B cell (primary cell): ENCODE measurements at regions of chr5 and their contacts with region 1.

Region 1: DNA sequence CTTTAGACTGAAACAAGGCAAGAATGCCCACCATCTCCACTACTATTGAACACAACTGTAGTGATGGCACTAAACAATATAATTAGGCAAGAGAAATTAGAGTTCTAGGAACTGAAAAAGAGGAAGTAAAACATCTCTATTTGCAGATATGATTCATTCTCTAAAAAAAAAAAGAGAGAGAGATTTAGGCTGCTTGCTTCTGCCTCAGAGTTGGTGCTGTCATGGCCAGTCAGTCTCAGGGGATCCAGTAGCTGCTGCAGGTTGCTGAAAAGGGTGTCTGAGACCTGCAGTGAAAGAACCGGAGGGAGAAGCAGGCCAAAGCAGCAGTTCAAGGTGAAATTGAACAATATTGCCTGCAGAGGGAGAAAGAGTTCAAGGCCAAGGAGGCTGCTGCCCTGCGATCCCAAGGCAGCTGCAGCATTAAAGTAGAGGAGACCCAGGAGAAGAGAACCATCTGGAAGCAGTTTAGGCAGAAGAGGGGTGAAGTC is 72.5 kb downstream of the AP3B1 start:
- DNase-seq: peak; percentile 90
- ATAC-seq: peak; percentile 100
- H3K4me3 ChIP-seq: no peak overlapping the region
- H3K4me3 Mint-ChIP-seq: peak overlapping the region; percentile 4
- H3K27ac ChIP-seq: peak overlapping the region; percentile 29 to 33
- H3K27ac Mint-ChIP-seq: peak overlapping the region; percentile 85
- H3K4me1 ChIP-seq: peaks cover 8 to 10% of the 10 kb centered on the region in 2 donors
- H3K4me1 Mint-ChIP-seq: peaks cover 18% of the 10 kb centered on the region
- H3K27me3 ChIP-seq: no peaks in the 10 kb centered on the region
- H3K27me3 Mint-ChIP-seq: no peaks in the 10 kb centered on the region
- CTCF ChIP-seq: peak; percentile 67

Region 2: GRCh38 chr5:78109891-78110324 is 112.1 kb before region 1 on chr5:
- CTCF ChIA-PET with region 1: no interaction called
- POLR2A ChIA-PET with region 1: no interaction called
- intact Hi-C with region 1: loop called (anchors 2 kb)
- DNase-seq: peak; percentile 80
- ATAC-seq: peak; percentile 71
- H3K4me3 ChIP-seq: peak overlapping the region in 4 of 5 experiments; percentile 4 to 51 (median 30)
- H3K4me3 Mint-ChIP-seq: peak overlapping the region; percentile 64
- H3K27ac ChIP-seq: peak overlapping the region; percentile 69 to 83
- H3K27ac Mint-ChIP-seq: peak overlapping the region; percentile 73
- H3K4me1 ChIP-seq: peaks cover 56 to 67% of the 10 kb centered on the region in 2 donors
- H3K4me1 Mint-ChIP-seq: peaks cover 58% of the 10 kb centered on the region
- H3K27me3 ChIP-seq: no peaks in the 10 kb centered on the region
- H3K27me3 Mint-ChIP-seq: no peaks in the 10 kb centered on the region
- CTCF ChIP-seq: no peak